Heart right ventricle (tissue), 16 donors: ENCODE measurements at regions of chr1 and their contacts with region 1.

Region 1: GRCh38 chr1:227318003-227318852 is at the start of gene CDC42BPA:
- DNase-seq: peak; percentile 87 to 91
- ATAC-seq: peak; percentile 90 to 95 (median 93)
- H3K4me3 ChIP-seq: peak within 1 kb of the TSS; percentile 78 to 96 (median 86)
- H3K27ac ChIP-seq: peak within 1 kb of the TSS; percentile 90 to 99 (median 98)
- H3K4me1 ChIP-seq: peaks cover 0 to 32% (median 15%) of the 10 kb centered on the region in 9 donors
- H3K27me3 ChIP-seq: peaks cover 0 to 29% (median 0%) of the 10 kb centered on the region in 7 donors
- CTCF ChIP-seq: no peak
- total RNA-seq, gene CDC42BPA: 22.2 to 39.5 (median 31.8) TPM

Region 2: GRCh38 chr1:227131193-227131592 is 187.0 kb before region 1 on chr1:
- intact Hi-C with region 1: loop called in 1 of 10 experiments (anchors 5 kb)
- DNase-seq: no peak
- ATAC-seq: peak in 3 of 8 donors; percentile 20 to 62 (median 34)
- H3K4me3 ChIP-seq: no peak overlapping the region
- H3K27ac ChIP-seq: no peak overlapping the region
- H3K4me1 ChIP-seq: peaks cover 0 to 13% (median 0%) of the 10 kb centered on the region in 9 donors
- H3K27me3 ChIP-seq: no peaks in the 10 kb centered on the region
- CTCF ChIP-seq: peak; percentile 14 to 66 (median 53)

Region 3: GRCh38 chr1:227234998-227235405 is 83.2 kb before region 1 on chr1:
- intact Hi-C with region 1: loop called in 5 of 10 experiments (anchors 5 to 10 kb)
- DNase-seq: peak in 1 of 2 donors; percentile 27
- ATAC-seq: peak in 7 of 8 donors; percentile 39 to 80 (median 67)
- H3K4me3 ChIP-seq: no peak overlapping the region
- H3K27ac ChIP-seq: no peak overlapping the region
- H3K4me1 ChIP-seq: peaks cover 0 to 42% (median 10%) of the 10 kb centered on the region in 9 donors
- H3K27me3 ChIP-seq: no peaks in the 10 kb centered on the region
- CTCF ChIP-seq: peak in 8 of 9 donors; percentile 26 to 66 (median 50)

Region 4: DNA sequence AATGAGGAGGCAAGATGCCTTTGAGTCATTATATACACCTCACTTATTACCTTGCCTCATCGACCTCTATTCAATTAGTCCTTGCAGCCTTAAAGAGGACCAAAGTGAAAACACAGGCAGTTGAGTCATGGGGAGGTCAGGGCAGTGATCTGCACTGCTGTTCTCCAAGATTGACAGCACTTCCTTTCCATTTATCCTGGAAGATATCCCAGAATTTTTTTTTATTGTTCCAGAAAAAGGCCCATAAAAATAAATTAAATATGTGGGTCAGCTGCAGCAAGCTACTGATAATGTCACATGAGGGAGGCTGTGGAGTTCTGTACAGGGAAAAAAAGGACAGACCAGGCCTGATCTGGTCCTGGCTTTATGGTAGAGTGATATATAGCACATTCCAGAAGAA is 33.2 kb after region 1 on chr1:
- intact Hi-C with region 1: loop called in 3 of 10 experiments (anchors 2 to 5 kb)
- DNase-seq: peak in 1 of 2 donors; percentile 18
- ATAC-seq: peak in 7 of 8 donors; percentile 58 to 88 (median 78)
- H3K4me3 ChIP-seq: no peak overlapping the region
- H3K27ac ChIP-seq: peak overlapping the region in 5 of 10 donors; percentile 12 to 48 (median 28)
- H3K4me1 ChIP-seq: peaks cover 3 to 31% (median 23%) of the 10 kb centered on the region in 9 donors
- H3K27me3 ChIP-seq: no peaks in the 10 kb centered on the region
- CTCF ChIP-seq: no peak

Region 5: DNA sequence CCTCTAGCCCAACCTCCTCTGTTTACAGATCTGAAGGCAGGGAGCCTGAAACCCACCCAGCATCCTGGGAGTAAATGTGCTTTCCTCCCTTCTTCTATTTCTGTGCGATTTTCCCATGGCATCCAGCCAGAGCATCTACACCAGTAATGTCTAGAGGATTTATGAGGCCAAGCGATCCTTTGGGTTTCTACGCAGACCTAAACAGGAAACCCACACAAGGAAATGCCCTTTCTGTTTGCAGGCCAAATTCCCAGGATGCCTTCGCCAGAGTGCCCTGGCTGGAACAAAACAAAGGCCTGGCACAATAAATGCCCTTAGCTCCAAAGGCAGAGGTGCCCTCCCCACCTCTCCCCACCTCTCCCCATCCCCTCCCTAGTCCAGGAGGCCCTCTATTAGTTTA is 110.6 kb after region 1 on chr1:
- intact Hi-C with region 1: loop called in 3 of 10 experiments (anchors 2 to 10 kb)
- DNase-seq: peak in 1 of 2 donors; percentile 62
- ATAC-seq: peak; percentile 31 to 67 (median 51)
- H3K4me3 ChIP-seq: no peak overlapping the region
- H3K27ac ChIP-seq: peak overlapping the region; percentile 10 to 78 (median 52)
- H3K4me1 ChIP-seq: peaks cover 3 to 52% (median 32%) of the 10 kb centered on the region in 9 donors
- H3K27me3 ChIP-seq: no peaks in the 10 kb centered on the region
- CTCF ChIP-seq: no peak